Caco-2 (cell line): ENCODE measurements at regions of chr20 and their contacts with region 1.

Region 1: DNA sequence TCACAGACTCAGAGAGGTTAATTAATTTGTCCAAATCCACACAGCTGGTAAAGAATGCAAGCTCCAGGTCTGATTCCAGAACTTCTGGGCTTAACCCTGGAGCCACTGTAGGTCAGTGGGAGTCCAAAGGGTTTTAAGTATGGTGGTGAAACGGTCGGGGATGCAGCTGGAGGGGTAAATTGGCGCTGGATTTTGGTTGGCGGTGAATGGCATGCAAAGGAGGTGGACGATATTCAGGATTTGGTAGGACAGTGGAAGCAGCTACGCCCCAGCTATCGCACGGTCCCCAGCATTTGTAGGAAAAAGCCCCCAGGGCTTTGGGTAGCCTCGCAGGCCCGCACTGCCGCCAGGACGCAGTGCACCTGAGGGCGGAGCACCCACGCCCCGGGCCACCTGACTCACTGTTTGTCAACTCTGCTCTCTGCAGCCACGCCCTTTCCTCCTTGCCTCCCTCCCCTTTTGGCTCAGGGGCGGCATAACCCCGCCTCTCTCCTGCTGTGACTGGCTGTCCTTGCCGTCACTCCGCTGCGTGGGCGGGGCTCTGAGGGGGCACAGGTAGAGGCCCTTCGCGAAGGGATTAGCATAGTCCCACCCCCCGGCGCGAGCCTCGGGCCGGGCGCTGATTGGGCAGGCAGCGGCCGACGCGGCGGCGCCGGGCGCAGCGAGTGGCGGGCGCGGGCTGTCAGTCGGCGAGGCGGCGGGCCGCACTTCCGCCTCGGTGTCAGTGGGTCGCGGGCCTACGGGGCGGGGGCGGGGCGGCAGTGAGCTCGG is at the start of gene OSBPL2:
- DNase-seq: peak; percentile 100
- H3K4me3 ChIP-seq: peak within 1 kb of the TSS; percentile 89
- H3K4me3 Mint-ChIP-seq: peak within 1 kb of the TSS; percentile 67
- H3K27ac Mint-ChIP-seq: peak within 1 kb of the TSS; percentile 85
- H3K4me1 ChIP-seq: peaks cover 11% of the 10 kb centered on the region
- H3K4me1 Mint-ChIP-seq: peaks cover 7% of the 10 kb centered on the region
- H3K27me3 ChIP-seq: no peaks in the 10 kb centered on the region
- H3K27me3 Mint-ChIP-seq: no peaks in the 10 kb centered on the region
- CTCF ChIP-seq: no peak
- total RNA-seq, gene OSBPL2: 130 and 132 TPM in 2 replicates

Region 2: GRCh38 chr20:62165762-62166399 is 72.1 kb before region 1 on chr20:
- CTCF ChIA-PET with region 1: no interaction called
- POLR2A ChIA-PET with region 1: no interaction called
- intact Hi-C with region 1: no loop called
- DNase-seq: peak in 1 of 2 experiments; percentile 56
- H3K4me3 ChIP-seq: no peak overlapping the region
- H3K4me3 Mint-ChIP-seq: no peak overlapping the region
- H3K27ac Mint-ChIP-seq: no peak overlapping the region
- H3K4me1 ChIP-seq: no peaks in the 10 kb centered on the region
- H3K4me1 Mint-ChIP-seq: no peaks in the 10 kb centered on the region
- H3K27me3 ChIP-seq: no peaks in the 10 kb centered on the region
- H3K27me3 Mint-ChIP-seq: no peaks in the 10 kb centered on the region
- CTCF ChIP-seq: no peak

Region 3: DNA sequence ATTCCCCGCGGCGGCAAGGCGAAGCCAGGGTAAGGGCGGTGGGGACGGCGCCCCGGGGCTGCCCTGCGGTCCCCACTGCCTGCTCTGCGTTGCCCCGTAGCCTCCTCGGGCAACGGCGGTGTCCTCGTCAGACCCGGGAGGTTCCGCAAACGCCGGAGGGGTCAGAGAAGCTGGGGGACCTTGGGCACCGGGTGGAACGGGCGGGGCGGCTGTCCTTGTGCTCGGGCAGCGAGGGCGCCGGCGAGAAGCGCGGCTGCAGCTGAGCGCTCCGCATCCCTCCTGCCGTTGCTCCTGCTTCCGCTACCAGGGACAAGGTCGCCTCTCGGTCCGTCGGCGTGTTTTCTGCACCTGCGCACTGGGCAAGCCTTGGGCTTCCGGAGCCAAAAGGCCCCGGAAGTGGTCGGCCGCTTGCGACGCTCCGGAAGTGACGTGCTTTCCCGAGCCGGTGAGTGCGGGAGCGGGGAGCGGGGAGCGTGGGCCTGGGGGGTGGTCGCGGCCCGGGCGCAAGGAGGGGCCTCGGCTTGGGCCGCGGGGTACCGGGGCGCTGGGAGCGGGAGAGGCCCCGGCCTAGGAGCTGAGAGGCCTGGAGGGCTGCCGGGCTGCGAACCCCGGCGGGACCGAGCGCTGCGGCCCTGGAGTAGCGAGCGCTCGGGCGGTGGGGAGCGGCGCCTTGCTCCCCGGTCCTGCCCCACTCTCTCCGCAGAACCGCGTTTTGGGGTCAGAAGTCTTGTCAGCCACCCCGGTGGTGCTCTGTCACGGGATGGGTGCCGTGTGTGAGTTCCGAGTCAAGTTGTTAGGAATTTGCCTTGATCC is 55.2 kb before region 1 on chr20 and contains the start of gene MTG2:
- CTCF ChIA-PET with region 1: interaction called, 3 read pairs
- POLR2A ChIA-PET with region 1: no interaction called
- intact Hi-C with region 1: loop called (anchors 2 kb)
- DNase-seq: peak; percentile 100
- H3K4me3 ChIP-seq: peak within 1 kb of the TSS; percentile 80
- H3K4me3 Mint-ChIP-seq: peak within 1 kb of the TSS; percentile 96
- H3K27ac Mint-ChIP-seq: peak within 1 kb of the TSS; percentile 99
- H3K4me1 ChIP-seq: peaks cover 24% of the 10 kb centered on the region
- H3K4me1 Mint-ChIP-seq: peaks cover 31% of the 10 kb centered on the region
- H3K27me3 ChIP-seq: no peaks in the 10 kb centered on the region
- H3K27me3 Mint-ChIP-seq: no peaks in the 10 kb centered on the region
- CTCF ChIP-seq: no peak
- total RNA-seq, gene MTG2: 110 and 111 TPM in 2 replicates

Region 4: DNA sequence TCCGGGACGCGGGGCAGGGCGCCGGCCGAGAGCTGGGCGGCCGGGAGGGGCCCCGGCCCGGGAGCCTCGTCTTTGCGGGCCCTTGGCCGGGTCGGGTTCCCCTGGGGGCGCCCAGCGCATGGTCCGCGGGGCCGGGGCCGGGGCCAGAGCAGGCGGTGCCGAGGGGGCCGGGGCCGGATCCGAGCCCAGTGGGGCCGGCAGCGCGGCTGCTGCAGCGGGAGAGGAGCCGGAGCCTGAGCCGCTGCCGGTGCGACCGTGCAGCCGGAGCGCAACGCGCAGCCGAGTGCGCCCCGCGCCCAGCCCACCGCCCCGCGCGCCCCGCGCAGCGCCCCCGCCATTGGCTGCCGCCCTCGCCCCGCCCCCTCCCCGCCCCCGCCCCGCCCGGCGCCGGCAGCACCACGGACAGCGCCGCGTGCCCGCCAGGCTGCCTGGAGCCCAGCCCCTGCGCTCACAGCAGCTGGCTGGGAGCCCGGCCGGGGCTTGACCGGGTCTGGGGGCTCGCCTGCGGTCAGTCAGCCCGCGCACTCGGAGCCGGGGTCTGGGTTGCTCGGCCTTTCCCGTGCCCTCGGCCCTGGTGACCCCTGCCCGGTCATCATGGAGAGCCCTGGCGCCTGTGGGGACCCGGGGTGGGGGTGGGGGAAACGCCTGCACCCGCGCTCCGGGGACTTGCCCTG is 17.9 kb before region 1 on chr20 and contains the start of gene HRH3:
- CTCF ChIA-PET with region 1: no interaction called
- POLR2A ChIA-PET with region 1: no interaction called
- intact Hi-C with region 1: loop called (anchors 1 kb)
- DNase-seq: peak in 1 of 2 experiments; percentile 91
- H3K4me3 ChIP-seq: peak within 1 kb of the TSS; percentile 29
- H3K4me3 Mint-ChIP-seq: peak within 1 kb of the TSS; percentile 65
- H3K27ac Mint-ChIP-seq: no peak within 1 kb of the TSS
- H3K4me1 ChIP-seq: peaks cover 26% of the 10 kb centered on the region
- H3K4me1 Mint-ChIP-seq: no peaks in the 10 kb centered on the region
- H3K27me3 ChIP-seq: peaks cover 37% of the 10 kb centered on the region
- H3K27me3 Mint-ChIP-seq: peaks cover 57% of the 10 kb centered on the region
- CTCF ChIP-seq: no peak
- total RNA-seq, gene HRH3: not detected in 2 replicates